K562 (cell line): ENCODE measurements at regions of chr11 and their contacts with region 1.

Region 1: DNA sequence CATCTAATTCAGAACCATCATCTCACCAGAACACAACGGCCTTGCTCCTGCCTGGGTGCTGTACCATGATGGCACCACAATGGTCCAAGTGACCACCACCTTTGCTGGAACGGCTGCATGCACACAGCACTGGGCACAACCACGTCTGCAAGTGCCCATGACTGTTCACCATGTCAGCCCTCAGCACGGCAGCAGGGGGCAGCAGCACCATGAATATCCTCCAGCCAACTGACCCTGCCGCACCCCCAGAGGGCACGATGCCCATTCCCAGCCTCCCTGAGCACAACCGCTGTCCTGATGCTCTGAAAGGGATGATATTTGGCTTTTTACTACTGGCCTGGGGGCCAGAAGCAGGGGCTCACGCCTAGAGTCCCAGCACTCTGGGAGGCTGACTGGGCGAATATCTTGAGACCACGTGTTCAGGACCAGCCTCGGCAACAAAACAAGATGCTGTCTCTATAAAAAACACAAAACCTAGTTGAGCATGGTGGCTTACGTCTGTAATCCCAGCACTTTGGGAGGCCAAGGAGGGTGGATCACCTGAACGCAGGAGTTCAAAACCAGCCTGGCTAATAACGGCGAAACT is 25.7 kb downstream of the DRD4 start:
- DNase-seq: peak; percentile 53 to 72 (median 67)
- ATAC-seq: peak; percentile 72
- H3K4me3 ChIP-seq: no peak overlapping the region
- H3K27ac ChIP-seq: no peak overlapping the region
- H3K4me1 ChIP-seq: peaks cover 16 to 34% of the 10 kb centered on the region in 2 experiments; a peak in 4 of 5 replicates
- H3K27me3 ChIP-seq: no peaks in the 10 kb centered on the region
- CTCF ChIP-seq: peak; percentile 78 to 79 (median 78)
- EP300 ChIP-seq: no peak
- POLR2A ChIP-seq: no peak
- RAD21 ChIP-seq: peak; percentile 49 to 78

Region 2: DNA sequence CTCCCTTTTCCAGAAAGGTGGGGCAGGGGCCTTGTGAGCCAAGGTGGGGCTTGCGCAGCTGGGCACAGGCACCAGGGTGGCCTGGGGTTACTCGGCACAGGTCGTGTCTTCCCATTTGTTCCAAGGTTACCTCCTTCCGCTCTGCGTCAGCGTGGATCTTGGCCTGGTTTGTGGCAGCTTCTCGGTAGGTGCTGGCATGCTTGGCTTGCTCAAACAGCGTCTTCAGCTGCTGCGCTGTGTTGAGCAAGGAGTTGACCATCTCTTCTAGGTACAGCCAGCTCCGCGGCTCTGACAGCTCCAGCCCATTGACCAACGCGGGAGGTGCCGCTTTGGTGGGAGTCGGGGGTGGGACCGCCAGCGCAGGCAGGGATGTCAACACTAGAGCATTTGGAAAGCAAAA is 11.6 kb after region 1 on chr11:
- CTCF ChIA-PET with region 1: no interaction called
- POLR2A ChIA-PET with region 1: interaction called, 14 read pairs
- in situ Hi-C with region 1: no loop called
- intact Hi-C with region 1: no loop called
- DNase-seq: no peak
- ATAC-seq: no peak
- H3K4me3 ChIP-seq: no peak overlapping the region
- H3K27ac ChIP-seq: no peak overlapping the region
- H3K4me1 ChIP-seq: peaks cover 0 to 2% of the 10 kb centered on the region in 2 experiments; a peak in 1 of 5 replicates
- H3K27me3 ChIP-seq: no peaks in the 10 kb centered on the region
- CTCF ChIP-seq: no peak
- EP300 ChIP-seq: no peak
- POLR2A ChIP-seq: no peak
- RAD21 ChIP-seq: no peak

Region 3: DNA sequence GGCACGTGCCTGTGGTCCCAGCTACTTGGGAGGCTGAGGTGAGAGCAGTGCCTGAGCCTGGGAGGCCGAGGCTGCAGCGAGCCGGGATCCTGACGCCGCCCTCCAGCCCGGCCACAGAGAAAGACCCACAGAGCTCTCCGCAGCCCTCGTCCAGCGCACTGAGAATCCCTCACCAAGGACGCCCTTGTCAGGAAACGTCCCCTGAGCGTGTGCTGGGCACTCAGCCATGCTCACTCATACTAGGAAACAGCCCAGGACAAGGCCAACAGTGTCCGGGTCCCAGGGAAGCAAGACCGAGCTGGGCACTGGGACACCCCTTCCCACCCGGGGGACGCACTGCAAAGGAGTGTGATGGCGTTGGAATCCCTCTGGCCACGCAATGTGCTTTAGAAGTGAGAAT is 17.7 kb after region 1 on chr11:
- CTCF ChIA-PET with region 1: no interaction called
- POLR2A ChIA-PET with region 1: interaction called, 14 read pairs
- in situ Hi-C with region 1: no loop called
- intact Hi-C with region 1: no loop called
- DNase-seq: no peak
- ATAC-seq: no peak
- H3K4me3 ChIP-seq: no peak overlapping the region
- H3K27ac ChIP-seq: no peak overlapping the region
- H3K4me1 ChIP-seq: peaks cover 0 to 5% of the 10 kb centered on the region in 2 experiments; a peak in 1 of 5 replicates
- H3K27me3 ChIP-seq: no peaks in the 10 kb centered on the region
- CTCF ChIP-seq: no peak
- EP300 ChIP-seq: no peak
- POLR2A ChIP-seq: no peak
- RAD21 ChIP-seq: no peak

Region 4: GRCh38 chr11:914747-915501 is 252.1 kb after region 1 on chr11:
- CTCF ChIA-PET with region 1: no interaction called
- POLR2A ChIA-PET with region 1: no interaction called
- in situ Hi-C with region 1: no loop called
- intact Hi-C with region 1: no loop called
- DNase-seq: peak in 1 of 4 experiments; percentile 52
- ATAC-seq: no peak; the same call in 2 of the 3 replicates
- H3K4me3 ChIP-seq: no peak overlapping the region
- H3K27ac ChIP-seq: peak overlapping the region; percentile 46; the same call in 1 of the 3 replicates
- H3K4me1 ChIP-seq: peaks cover 21 to 40% of the 10 kb centered on the region in 2 experiments
- H3K27me3 ChIP-seq: no peaks in the 10 kb centered on the region
- CTCF ChIP-seq: no peak
- EP300 ChIP-seq: no peak
- POLR2A ChIP-seq: no peak
- RAD21 ChIP-seq: no peak